OCI-LY7 (cell line): ENCODE measurements at regions of chr11 and their contacts with region 1.

Region 1: GRCh38 chr11:93942176-93942575 is 79.0 kb upstream of the HEPHL1 start:
- DNase-seq: no peak
- H3K4me3 ChIP-seq: no peak overlapping the region
- H3K27ac ChIP-seq: no peak overlapping the region
- H3K4me1 ChIP-seq: no peaks in the 10 kb centered on the region
- CTCF ChIP-seq: no peak

Region 2: DNA sequence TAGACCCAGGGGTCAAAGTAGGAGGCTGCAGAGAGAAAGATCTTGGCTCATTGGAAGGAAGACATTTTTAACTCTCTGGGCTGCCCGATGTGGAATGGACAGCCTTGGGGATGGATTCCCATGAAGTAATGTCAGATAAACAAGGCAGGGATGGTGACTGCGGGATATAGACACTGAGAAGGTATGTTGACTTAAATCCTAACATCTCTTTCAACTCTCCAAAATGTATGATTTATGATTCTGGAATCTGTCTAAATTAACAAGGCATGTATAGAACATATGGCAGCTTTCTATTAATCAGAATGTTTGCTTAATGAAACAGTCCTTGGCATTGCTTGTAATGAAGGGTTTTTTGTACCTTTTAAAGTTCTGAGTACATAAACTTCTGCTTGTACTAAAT is 35.7 kb before region 1 on chr11:
- CTCF ChIA-PET with region 1: no interaction called
- POLR2A ChIA-PET with region 1: interaction called, 15 read pairs
- intact Hi-C with region 1: no loop called
- DNase-seq: no peak
- H3K4me3 ChIP-seq: no peak overlapping the region
- H3K27ac ChIP-seq: no peak overlapping the region
- H3K4me1 ChIP-seq: no peaks in the 10 kb centered on the region
- CTCF ChIP-seq: no peak

Region 3: GRCh38 chr11:94457118-94458029 is 515.2 kb after region 1 on chr11:
- CTCF ChIA-PET with region 1: no interaction called
- POLR2A ChIA-PET with region 1: no interaction called
- intact Hi-C with region 1: no loop called
- DNase-seq: no peak
- H3K4me3 ChIP-seq: no peak overlapping the region
- H3K27ac ChIP-seq: no peak overlapping the region
- H3K4me1 ChIP-seq: no peaks in the 10 kb centered on the region
- CTCF ChIP-seq: no peak